Sigmoid colon (tissue), 7 donors: ENCODE measurements at regions of chr7 and their contacts with region 1.

Region 1: DNA sequence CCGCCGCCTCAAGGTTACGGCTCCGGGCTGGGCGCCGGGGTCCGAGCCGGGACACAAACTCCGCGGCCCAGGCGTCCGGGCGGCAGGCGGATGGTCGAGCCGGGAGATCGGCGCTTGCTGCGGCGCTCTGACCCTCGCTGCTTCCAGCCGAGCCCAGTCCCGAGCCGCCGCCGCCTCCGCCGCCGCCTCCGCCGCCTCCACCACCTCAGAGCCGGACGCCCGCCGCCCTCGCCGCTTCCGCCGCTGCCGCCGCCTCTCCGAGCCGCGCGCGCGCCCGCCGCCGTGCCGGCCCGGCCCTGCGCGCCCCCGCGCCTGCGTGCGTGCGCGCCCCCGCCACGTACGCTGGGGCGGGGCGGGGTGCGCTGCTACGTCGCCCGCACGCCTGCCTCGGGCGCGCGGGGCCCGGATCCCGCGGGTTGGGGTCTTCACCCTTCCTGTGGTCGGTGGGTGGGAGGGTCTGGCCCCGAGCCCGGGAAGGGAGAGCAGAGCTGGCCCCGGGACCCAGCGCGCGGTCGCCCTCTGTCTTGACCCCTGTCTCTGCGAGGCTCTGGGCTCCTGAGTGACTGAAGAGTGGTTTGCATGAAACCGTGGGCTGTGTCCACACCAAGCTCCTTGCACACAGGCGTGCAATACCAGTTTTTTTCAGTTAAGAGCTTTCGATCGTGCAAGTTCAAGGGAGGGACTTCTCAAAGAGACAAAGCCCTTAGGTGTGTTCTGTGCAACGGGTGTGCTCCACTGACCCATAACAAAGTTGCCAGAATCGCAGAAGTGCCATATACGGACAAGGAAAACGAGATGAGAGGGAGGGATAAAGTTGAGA is at the start of gene SMURF1:
- DNase-seq: peak; percentile 80
- H3K4me3 ChIP-seq: peak within 1 kb of the TSS; percentile 89 to 98 (median 94)
- H3K27ac ChIP-seq: peak within 1 kb of the TSS; percentile 94 to 100 (median 99)
- H3K4me1 ChIP-seq: peaks cover 0 to 37% (median 24%) of the 10 kb centered on the region in 4 donors
- H3K27me3 ChIP-seq: no peaks in the 10 kb centered on the region
- CTCF ChIP-seq: no peak
- EP300 ChIP-seq: no peak
- POLR2A ChIP-seq: peak in 1 of 2 donors; percentile 40
- total RNA-seq, gene SMURF1: 10.7 to 18.0 (median 15.8) TPM

Region 2: GRCh38 chr7:99040104-99040958 is 103.7 kb before region 1 on chr7:
- intact Hi-C with region 1: loop called (anchors 2 kb)
- DNase-seq: peak; percentile 93
- H3K4me3 ChIP-seq: no peak overlapping the region
- H3K27ac ChIP-seq: peak overlapping the region; percentile 48 to 56 (median 54)
- H3K4me1 ChIP-seq: peaks cover 0 to 16% (median 8%) of the 10 kb centered on the region in 4 donors
- H3K27me3 ChIP-seq: no peaks in the 10 kb centered on the region
- CTCF ChIP-seq: peak; percentile 46 to 82 (median 78)
- EP300 ChIP-seq: no peak
- POLR2A ChIP-seq: no peak

Region 3: DNA sequence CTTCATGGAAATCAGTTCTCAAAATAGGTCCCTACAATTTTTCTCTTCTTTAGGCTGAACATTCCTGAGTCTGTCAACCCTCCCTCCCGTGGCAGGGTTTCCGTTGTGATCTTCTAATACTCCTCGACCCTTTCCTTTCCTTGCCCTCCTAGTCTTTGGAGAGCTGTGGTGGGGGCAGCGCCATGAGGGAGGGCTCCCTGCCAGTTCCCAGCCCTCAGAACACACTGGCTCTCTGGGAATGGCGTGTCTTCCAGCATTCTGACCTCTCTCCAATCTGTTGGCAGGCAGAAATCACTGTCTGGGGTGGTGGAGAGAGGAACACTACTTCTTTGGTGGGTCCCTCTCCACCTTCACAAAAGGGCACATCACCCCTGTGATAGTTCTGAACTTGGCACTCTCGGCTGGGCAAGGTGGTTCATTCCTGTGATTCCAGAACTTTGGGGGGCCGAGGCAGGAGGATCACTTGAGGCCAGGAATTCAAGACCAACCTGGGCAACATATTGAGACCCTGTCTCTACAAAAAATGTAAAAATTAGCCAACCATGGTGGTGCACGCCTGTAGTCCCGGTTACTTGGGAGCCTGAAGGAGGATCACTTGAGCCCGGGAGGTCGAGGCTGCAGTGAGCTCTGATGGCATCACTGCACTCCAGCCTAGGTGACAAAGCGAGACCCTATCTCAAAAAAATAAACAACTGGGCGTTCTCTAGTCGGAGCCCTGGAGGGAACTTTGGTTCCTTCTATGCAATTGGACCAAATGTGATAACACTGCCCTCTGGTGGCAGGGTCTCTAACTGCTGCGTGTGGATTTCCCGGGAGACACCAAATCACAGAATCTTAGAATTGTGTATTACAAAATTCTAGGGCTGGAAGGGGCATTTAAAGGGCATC is 168.5 kb after region 1 on chr7:
- intact Hi-C with region 1: loop called (anchors 5 kb)
- DNase-seq: peak; percentile 76
- H3K4me3 ChIP-seq: no peak overlapping the region
- H3K27ac ChIP-seq: no peak overlapping the region
- H3K4me1 ChIP-seq: no peaks in the 10 kb centered on the region
- H3K27me3 ChIP-seq: no peaks in the 10 kb centered on the region
- CTCF ChIP-seq: peak; percentile 59 to 90 (median 82)
- EP300 ChIP-seq: no peak
- POLR2A ChIP-seq: no peak

Region 4: DNA sequence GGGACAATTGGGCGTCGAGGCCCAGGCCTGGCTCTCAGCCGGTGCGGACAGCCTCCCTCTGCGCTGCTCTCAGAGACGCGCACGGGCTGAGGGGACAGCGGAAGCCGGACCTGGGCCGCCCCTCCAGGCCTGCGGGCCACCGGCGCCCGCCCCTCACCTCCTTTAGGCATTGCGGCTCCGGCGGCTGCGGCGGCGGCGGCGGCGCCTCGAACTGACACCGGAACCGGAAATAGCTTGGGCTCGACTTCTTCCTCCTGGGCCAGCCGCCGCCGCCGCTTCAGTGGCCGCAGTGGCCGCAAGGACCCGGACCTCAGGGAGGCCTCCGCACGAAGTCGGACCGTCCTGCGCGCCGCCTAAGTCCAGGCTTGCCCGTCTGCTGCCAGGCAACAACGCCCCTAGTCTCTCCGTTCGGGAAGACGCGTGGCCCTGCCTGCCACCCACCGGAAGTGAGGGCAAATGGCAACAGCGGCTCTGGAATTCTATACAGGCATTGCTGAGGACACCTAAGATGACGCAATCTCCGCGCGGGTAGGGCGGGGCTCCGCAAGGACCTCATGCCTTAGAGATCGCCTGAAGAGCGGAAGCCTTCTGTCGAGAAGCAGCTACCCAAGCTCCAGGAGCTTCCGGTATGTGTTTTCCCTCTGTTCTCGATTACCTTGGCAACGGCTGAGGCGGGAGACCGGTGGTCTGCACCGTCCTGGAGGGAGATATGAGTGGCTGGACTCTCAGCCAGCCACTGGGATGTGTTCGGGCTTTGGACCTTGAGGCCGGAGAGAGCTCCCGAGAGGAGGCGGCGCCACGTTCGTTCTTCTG is 264.5 kb after region 1 on chr7 and contains the starts of genes BUD31 and PDAP1:
- intact Hi-C with region 1: loop called (anchors 2 kb)
- DNase-seq: peak; percentile 97
- H3K4me3 ChIP-seq: peak within 1 kb of the TSS; percentile 80 to 99 (median 96)
- H3K27ac ChIP-seq: peak within 1 kb of the TSS; percentile 95 to 99 (median 96)
- H3K4me1 ChIP-seq: peaks cover 0 to 58% (median 51%) of the 10 kb centered on the region in 4 donors
- H3K27me3 ChIP-seq: no peaks in the 10 kb centered on the region
- CTCF ChIP-seq: peak in 1 of 4 experiments; percentile 42
- EP300 ChIP-seq: peak in 2 of 4 donors; percentile 7 to 44
- POLR2A ChIP-seq: peak; percentile 75 to 81
- total RNA-seq, gene BUD31: 44.6 to 89.8 (median 69.3) TPM
- total RNA-seq, gene PDAP1: 84.5 to 89.5 (median 85.1) TPM

Region 5: DNA sequence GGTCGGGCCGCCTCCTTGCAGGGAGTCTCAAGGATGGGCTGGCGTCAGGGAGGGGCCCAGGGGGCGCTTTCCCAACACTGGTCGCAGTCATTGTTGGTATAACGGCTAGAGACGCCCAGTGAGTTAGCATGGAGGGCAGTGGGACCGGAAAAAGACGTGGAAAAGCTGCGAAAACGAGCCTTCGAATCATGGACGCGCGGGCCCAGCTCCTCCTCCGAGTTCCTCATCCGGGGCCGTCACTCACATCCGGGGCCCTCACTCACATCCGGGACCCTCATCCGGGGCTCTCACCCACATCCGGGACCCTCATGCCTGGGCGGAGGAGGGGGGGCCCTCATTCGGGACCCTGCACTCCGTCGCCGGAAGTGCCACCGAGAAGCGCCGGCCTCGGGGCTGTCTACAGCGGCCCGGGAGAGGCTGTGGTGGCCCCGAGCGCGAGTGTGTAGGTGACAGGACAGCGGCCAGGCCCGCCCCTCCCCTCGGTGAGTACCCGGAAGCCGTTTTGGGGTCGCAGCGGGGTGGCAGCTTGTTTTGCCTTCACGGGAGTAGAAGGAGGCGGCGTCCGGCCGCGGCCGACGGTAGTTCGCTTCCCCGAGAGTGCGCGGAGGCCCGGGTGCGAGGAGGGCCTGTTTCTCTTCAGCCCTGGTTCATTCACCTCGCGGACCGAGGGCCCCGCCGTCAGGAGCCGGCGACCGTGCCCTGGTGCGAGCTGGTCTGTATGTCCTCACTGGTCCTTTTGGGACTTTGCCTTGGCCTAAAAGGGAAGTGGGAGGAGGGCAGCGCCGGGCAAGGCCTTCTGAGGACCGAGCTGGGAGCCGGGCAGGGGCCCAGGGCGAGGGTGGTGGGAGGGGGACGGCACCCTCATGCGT is 414.5 kb after region 1 on chr7 and contains the start of gene ZNF655:
- intact Hi-C with region 1: loop called (anchors 2 kb)
- DNase-seq: peak; percentile 97
- H3K4me3 ChIP-seq: peak within 1 kb of the TSS; percentile 61 to 97 (median 70)
- H3K27ac ChIP-seq: peak within 1 kb of the TSS; percentile 93 to 98 (median 96)
- H3K4me1 ChIP-seq: peaks cover 0 to 49% (median 45%) of the 10 kb centered on the region in 4 donors
- H3K27me3 ChIP-seq: no peaks in the 10 kb centered on the region
- CTCF ChIP-seq: no peak
- EP300 ChIP-seq: no peak
- POLR2A ChIP-seq: peak; percentile 75 to 80
- total RNA-seq, gene ZNF655: 124 to 148 (median 131) TPM